Caco-2 (cell line): ENCODE measurements at regions of chr10 and their contacts with region 1.

Region 1: GRCh38 chr10:73358331-73359279 is at the start of gene CFAP70:
- DNase-seq: peak; percentile 97 to 98
- H3K4me3 ChIP-seq: peak within 1 kb of the TSS; percentile 66
- H3K4me3 Mint-ChIP-seq: peak within 1 kb of the TSS; percentile 91
- H3K27ac Mint-ChIP-seq: peak within 1 kb of the TSS; percentile 99
- H3K4me1 ChIP-seq: peaks cover 11% of the 10 kb centered on the region; the same call in 1 of the 2 replicates
- H3K4me1 Mint-ChIP-seq: peaks cover 12% of the 10 kb centered on the region
- H3K27me3 ChIP-seq: no peaks in the 10 kb centered on the region
- H3K27me3 Mint-ChIP-seq: peaks cover 4% of the 10 kb centered on the region
- CTCF ChIP-seq: no peak
- total RNA-seq, gene CFAP70: 0.26 and 0.39 TPM in 2 replicates

Region 2: DNA sequence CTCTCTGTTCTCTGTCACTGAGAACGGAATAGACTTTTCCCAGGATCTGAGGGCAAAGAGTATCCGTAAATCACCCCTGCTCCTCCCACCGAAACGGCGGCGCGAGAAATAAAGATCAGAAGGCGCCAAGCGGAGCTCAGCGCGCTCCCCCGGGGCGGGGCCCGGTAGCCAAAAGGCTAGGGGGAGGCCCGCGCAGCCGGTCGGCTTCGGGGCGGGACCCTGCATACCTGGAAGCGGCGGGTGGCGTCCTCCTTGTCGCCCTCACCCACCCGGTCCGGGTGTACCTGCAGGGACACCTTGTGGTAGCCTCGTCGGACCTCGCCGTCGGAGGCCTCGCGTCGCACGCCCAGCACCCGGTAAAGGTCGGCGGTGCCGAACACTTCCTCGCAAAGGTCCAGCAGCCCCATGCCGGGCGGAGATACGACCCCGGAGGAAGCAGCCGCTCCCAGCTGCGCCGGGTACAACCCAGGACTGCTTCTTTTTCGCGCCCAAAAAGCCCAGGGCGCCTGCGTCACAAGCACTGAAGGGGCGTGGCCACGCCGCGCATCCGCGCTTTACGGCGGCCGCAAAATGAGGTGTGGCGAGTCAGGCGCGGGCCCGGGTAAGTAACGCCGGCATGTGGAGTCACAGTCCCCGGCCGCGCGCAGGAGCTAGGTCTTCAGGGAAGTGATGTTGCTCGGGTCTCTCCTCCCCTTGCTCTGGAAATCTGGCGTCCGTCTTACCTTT is 111.7 kb before region 1 on chr10 and contains the start of gene DNAJC9:
- CTCF ChIA-PET with region 1: no interaction called
- POLR2A ChIA-PET with region 1: interaction called, 18 read pairs
- intact Hi-C with region 1: loop called (anchors 2 kb)
- DNase-seq: peak; percentile 99 to 100
- H3K4me3 ChIP-seq: peak within 1 kb of the TSS; percentile 86
- H3K4me3 Mint-ChIP-seq: peak within 1 kb of the TSS; percentile 99
- H3K27ac Mint-ChIP-seq: peak within 1 kb of the TSS; percentile 100
- H3K4me1 ChIP-seq: 0 out of 2 replicates have a peak, but pooled peaks cover 13% of the 10 kb centered on the region
- H3K4me1 Mint-ChIP-seq: peaks cover 43% of the 10 kb centered on the region
- H3K27me3 ChIP-seq: no peaks in the 10 kb centered on the region
- H3K27me3 Mint-ChIP-seq: no peaks in the 10 kb centered on the region
- CTCF ChIP-seq: peak in 1 of 2 experiments; percentile 44
- total RNA-seq, gene DNAJC9: 64.4 and 65.2 TPM in 2 replicates

Region 3: DNA sequence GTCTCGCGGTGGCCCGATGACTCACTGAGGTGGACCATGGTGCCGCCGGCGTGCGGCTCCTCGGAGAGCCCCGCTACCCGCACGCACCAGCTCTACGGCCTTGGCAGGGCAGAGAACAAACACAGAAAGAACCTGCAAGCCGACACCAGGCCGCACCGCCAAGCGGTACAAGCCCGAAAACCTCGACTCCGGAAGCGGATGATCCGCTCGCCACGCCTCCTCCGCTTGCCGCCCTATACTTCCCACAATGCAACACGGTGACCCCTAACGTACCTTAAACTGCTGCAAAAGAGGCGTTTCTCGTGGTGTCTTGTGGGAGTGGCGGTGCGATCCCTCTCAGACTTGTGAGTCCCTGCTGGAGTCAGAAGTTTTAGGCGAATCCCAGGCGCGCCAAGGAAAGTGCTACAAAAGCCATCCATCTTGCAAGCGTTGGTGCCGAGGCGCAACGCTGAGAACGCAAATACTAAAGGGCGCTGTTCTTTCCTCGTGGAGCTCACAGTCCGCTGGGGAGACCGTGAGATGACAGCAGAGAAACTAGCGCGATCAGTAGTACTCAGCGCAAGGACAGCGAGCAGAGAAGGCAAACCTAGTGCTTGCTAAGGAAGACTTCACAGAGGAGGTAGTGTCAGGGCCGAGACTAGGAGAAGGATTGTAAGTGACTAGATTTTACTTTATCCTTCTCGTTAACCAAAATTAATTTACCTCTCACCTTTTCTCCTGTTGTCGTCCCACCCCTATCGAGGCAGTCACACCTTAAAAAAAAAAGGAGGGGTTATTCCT is 106.0 kb before region 1 on chr10 and contains the start of gene MRPS16:
- CTCF ChIA-PET with region 1: interaction called, 3 read pairs
- POLR2A ChIA-PET with region 1: interaction called, 18 read pairs
- intact Hi-C with region 1: loop called (anchors 2 kb)
- DNase-seq: peak; percentile 97 to 98
- H3K4me3 ChIP-seq: peak within 1 kb of the TSS; percentile 71
- H3K4me3 Mint-ChIP-seq: peak within 1 kb of the TSS; percentile 94
- H3K27ac Mint-ChIP-seq: peak within 1 kb of the TSS; percentile 99
- H3K4me1 ChIP-seq: peaks cover 9% of the 10 kb centered on the region
- H3K4me1 Mint-ChIP-seq: peaks cover 22% of the 10 kb centered on the region
- H3K27me3 ChIP-seq: no peaks in the 10 kb centered on the region
- H3K27me3 Mint-ChIP-seq: no peaks in the 10 kb centered on the region
- CTCF ChIP-seq: no peak
- total RNA-seq, gene MRPS16: 191 and 194 TPM in 2 replicates